ENCODE measurements at regions of chr11 and their contacts with region 1.

Region 1: DNA sequence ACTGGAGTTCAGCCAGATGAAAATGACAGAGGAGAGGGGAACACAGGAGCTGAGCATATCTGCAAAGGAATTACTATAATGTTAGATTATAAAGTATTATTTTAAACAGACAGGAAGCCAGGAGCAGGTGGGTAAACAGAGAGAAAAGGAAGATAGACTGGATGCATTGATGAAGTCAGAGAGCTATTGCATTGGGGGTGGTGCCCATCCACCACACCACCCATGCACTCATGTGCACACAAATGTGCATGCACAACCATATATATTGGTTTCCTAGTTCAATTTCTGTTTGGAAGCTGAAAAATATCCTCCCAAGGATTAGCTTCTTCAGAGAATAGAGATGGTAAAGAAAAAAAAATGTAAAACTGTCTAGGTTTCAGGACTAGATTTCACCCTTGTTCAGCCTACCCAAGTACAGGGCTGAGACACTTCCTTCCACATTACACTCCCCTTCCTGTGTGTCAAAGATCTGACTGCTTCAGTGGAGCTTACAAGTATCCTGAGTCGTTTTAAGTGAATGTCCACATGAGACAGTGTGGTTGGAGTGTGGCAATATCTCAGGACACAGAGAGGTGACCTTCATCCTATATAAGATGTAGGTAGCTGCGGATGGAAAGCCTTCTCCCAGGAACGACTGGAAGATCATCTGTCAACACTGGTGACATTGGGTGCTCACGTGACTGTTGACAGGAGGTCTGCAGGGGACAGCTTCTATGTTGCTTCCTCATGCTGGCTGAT is 12.2 kb upstream of the SMPD1 start:
- H3K4me3 ChIP-seq: no peak overlapping the region
- H3K27ac ChIP-seq: no peak overlapping the region
- H3K4me1 ChIP-seq: no peaks in the 10 kb centered on the region
- CTCF ChIP-seq: no peak

Region 2: DNA sequence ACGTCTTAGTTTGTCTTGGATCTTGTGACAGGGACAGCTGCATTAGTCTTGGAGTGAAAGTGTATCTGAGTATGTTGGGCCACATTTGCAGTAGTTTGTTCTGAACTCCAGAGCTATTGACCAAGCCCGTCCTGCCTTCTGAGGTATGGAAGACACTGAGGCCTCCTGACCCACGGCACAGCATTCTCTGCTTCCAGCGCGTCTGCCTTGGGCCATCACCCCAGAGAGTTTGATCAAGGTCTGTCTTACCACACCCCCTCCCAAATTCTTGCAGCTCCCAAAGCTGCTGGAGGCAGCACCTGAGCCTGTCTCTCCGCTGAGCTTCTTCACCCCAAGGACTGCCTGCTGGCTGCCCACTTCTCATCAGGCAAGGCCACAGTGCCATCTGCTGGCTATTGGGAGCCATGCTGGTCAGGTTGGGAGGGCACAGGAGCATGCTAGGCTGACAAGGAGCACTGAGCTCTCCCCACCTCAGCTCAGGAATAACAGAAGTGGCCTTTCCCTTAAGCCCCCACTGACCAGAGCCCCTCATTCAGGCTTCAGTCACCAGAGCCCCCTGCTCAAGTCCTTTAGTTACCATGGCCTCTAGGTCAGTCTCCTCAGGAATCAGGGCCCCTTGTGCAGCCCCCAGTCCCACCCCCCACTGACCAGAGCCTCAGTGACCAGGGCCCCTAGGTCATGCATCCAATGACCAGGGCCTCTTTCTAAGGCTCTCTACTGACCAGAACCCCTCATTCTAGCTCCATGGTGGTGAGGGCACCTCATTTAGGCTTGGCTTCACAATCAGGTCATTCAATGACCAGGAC is 15.0 kb before region 1 on chr11:
- CTCF ChIA-PET with region 1: interaction called, 28 read pairs
- POLR2A ChIA-PET with region 1: no interaction called
- H3K4me3 ChIP-seq: no peak overlapping the region
- H3K27ac ChIP-seq: no peak overlapping the region
- H3K4me1 ChIP-seq: no peaks in the 10 kb centered on the region
- CTCF ChIP-seq: peak; percentile 64

Region 3: GRCh38 chr11:6443269-6444003 is 65.4 kb after region 1 on chr11:
- CTCF ChIA-PET with region 1: interaction called, 228 read pairs
- POLR2A ChIA-PET with region 1: interaction called, 3 read pairs
- H3K4me3 ChIP-seq: no peak overlapping the region
- H3K27ac ChIP-seq: no peak overlapping the region
- H3K4me1 ChIP-seq: no peaks in the 10 kb centered on the region
- CTCF ChIP-seq: 0 out of 2 replicates have a peak, but pooled peaks have one; percentile 25

Region 4: DNA sequence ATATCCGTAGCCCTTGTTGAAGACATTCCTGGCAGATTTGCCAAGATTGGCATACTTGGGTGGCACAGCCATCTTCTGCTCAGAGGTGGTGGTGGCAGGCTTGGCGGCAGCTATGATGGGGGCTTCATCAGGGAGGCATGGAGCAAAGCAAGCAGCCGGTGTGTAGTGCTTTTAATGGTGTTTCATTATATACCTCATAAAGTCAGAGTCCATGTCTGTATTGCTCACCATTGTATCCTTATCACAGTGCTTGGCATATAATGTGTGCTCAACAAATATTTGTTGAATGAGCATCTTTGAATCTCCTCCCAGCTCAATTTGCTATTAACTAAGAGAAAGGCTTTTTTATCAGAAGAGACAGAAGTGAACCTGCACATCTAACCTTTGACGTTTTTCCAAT is 111.2 kb after region 1 on chr11:
- CTCF ChIA-PET with region 1: interaction called, 10 read pairs
- POLR2A ChIA-PET with region 1: no interaction called
- H3K4me3 ChIP-seq: no peak overlapping the region
- H3K27ac ChIP-seq: no peak overlapping the region
- H3K4me1 ChIP-seq: no peaks in the 10 kb centered on the region
- CTCF ChIP-seq: no peak

Region 5: DNA sequence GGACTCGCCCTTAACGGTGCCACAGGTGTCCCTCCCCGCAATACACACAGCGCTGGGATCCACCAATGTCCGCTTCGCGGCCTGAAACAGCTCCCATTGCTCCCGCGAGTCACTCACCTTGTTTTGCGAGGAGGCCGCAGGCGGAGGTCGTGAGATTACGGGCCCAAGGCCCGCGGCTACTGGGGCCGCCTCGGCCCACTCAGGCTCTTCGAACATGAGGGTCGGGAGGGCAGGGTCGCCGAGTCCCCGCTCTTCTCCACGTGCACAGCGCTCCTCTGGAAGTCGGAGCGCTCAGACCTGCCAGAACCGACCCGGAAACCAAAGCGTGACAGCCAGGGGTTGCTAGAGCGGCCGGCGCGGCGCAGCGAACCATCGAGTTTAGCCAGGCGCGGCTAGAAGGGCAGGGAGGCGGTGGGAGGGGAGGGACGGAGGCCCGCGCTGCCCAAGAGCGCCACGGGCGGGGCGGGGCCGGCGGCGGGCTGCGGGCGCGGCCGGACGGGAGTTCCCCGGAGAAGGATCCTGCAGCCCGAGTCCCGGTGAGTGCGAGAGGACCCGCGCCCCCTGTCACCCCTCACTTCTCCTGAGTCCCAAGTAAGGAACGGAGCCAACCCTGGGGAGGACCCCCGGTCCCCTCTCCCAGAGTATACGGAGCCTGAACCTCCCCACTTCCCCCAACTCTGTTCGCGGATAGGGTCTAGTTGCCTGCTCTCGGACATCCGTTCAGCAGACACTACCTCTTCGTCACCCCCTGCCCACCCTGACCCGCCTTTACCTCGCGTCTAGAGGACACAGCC is 225.4 kb after region 1 on chr11 and contains the starts of genes ILK and RRP8:
- CTCF ChIA-PET with region 1: interaction called, 10 read pairs
- POLR2A ChIA-PET with region 1: interaction called, 4 read pairs
- H3K4me3 ChIP-seq: peak within 1 kb of the TSS; percentile 92
- H3K27ac ChIP-seq: peak within 1 kb of the TSS; percentile 61
- H3K4me1 ChIP-seq: no peaks in the 10 kb centered on the region
- CTCF ChIP-seq: no peak; the same call in 1 of the 2 replicates

Region 6: GRCh38 chr11:6737872-6738466 is 359.9 kb after region 1 on chr11:
- CTCF ChIA-PET with region 1: interaction called, 15 read pairs
- POLR2A ChIA-PET with region 1: no interaction called
- H3K4me3 ChIP-seq: no peak overlapping the region
- H3K27ac ChIP-seq: no peak overlapping the region
- H3K4me1 ChIP-seq: no peaks in the 10 kb centered on the region
- CTCF ChIP-seq: no peak

Measured in HEK293 (cell line).